ENCODE measurements at regions of chr6 and their contacts with region 1.

Region 1: DNA sequence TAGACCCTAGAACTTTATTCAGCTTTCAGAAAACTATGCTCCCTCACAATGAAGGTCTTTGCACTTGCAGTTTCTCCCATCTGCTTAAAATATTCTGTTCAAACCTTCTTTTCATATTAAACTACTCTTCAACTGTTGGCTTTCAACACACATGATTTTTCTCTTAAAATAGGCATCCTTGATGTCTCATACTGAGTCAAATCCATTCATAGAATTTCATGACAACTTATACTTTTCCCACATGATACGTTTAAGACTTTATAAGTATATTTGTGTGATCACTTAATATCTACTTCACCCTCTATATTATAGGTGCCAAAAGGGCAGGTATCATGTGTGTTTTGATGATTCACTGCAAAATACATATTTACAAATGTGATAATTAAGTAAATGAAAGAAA is 412.5 kb downstream of the MMUT start:
- DNase-seq: no peak
- H3K4me3 ChIP-seq: no peak overlapping the region
- H3K27ac ChIP-seq: no peak overlapping the region
- H3K4me1 ChIP-seq: no peaks in the 10 kb centered on the region
- H3K27me3 ChIP-seq: no peaks in the 10 kb centered on the region
- CTCF ChIP-seq: no peak
- EP300 ChIP-seq: no peak
- POLR2A ChIP-seq: no peak

Region 2: GRCh38 chr6:49001856-49002541 is 48.6 kb before region 1 on chr6:
- in situ Hi-C with region 1: no loop called
- intact Hi-C with region 1: no loop called
- DNase-seq: no peak
- H3K4me3 ChIP-seq: no peak overlapping the region
- H3K27ac ChIP-seq: no peak overlapping the region
- H3K4me1 ChIP-seq: no peaks in the 10 kb centered on the region
- H3K27me3 ChIP-seq: no peaks in the 10 kb centered on the region
- CTCF ChIP-seq: no peak
- EP300 ChIP-seq: no peak
- POLR2A ChIP-seq: no peak

Region 3: GRCh38 chr6:49038294-49038822 is 12.2 kb before region 1 on chr6:
- in situ Hi-C with region 1: no loop called
- intact Hi-C with region 1: loop called (anchors 1 kb)
- DNase-seq: no peak
- H3K4me3 ChIP-seq: no peak overlapping the region
- H3K27ac ChIP-seq: no peak overlapping the region
- H3K4me1 ChIP-seq: no peaks in the 10 kb centered on the region
- H3K27me3 ChIP-seq: no peaks in the 10 kb centered on the region
- CTCF ChIP-seq: no peak
- EP300 ChIP-seq: no peak
- POLR2A ChIP-seq: no peak

Measured in transverse colon (tissue), 4 donors.